ENCODE measurements at regions of chr7 and their contacts with region 1.

Region 1: GRCh38 chr7:81457852-81458522 is 311.9 kb downstream of the HGF start:
- DNase-seq: no peak
- H3K4me3 ChIP-seq: no peak overlapping the region
- H3K27ac ChIP-seq: no peak overlapping the region
- H3K4me1 ChIP-seq: peaks cover 0 to 17% of the 10 kb centered on the region in 2 experiments; a peak in 2 of 4 replicates
- H3K27me3 ChIP-seq: no peaks in the 10 kb centered on the region
- CTCF ChIP-seq: peak; percentile 74
- EP300 ChIP-seq: no peak
- RAD21 ChIP-seq: peak; percentile 81

Region 2: DNA sequence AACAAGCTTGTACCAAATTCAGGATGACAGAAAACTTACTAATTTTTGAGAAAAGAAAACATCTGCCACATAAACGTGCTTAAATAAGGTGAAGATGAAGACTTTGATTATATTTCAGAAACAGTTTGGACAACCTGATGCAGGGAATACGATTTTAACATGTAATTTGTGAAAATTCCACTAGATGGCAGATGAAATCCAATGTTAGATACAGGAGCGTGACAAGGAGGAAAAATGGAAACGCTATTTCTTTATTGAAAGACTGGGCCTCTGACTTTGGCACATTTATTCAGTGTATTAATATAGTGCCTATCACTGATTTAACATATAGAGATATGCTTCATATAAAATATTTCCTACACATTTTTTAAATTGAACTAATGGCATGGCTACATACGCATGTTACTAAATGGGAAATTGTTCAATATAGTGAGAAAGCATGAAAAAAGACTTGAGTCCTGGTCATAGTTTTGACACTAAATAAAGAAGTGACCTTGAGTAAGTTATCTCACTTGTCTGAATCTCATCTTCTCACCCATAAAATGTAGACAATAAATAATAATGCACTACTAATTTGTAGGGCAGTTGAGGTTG is 758.8 kb before region 1 on chr7:
- CTCF ChIA-PET with region 1: interaction called, 49 read pairs
- POLR2A ChIA-PET with region 1: no interaction called
- DNase-seq: peak; percentile 36
- H3K4me3 ChIP-seq: no peak overlapping the region
- H3K27ac ChIP-seq: no peak overlapping the region
- H3K4me1 ChIP-seq: peaks cover 8 to 16% of the 10 kb centered on the region in 2 experiments; a peak in 3 of 4 replicates
- H3K27me3 ChIP-seq: no peaks in the 10 kb centered on the region
- CTCF ChIP-seq: peak; percentile 91
- EP300 ChIP-seq: no peak
- RAD21 ChIP-seq: peak; percentile 99

Region 3: GRCh38 chr7:80907141-80907601 is 550.8 kb before region 1 on chr7:
- CTCF ChIA-PET with region 1: interaction called, 10 read pairs
- POLR2A ChIA-PET with region 1: no interaction called
- DNase-seq: peak; percentile 66
- H3K4me3 ChIP-seq: peak overlapping the region; percentile 2 to 31; a peak in 3 of 4 replicates
- H3K27ac ChIP-seq: peak overlapping the region; percentile 69 to 97
- H3K4me1 ChIP-seq: peaks cover 24 to 54% of the 10 kb centered on the region in 2 experiments
- H3K27me3 ChIP-seq: no peaks in the 10 kb centered on the region
- CTCF ChIP-seq: no peak
- EP300 ChIP-seq: peak; percentile 91 to 96
- RAD21 ChIP-seq: peak; percentile 22; the same call in 1 of the 2 replicates

Region 4: GRCh38 chr7:80941208-80941758 is 516.7 kb before region 1 on chr7:
- CTCF ChIA-PET with region 1: interaction called, 10 read pairs
- POLR2A ChIA-PET with region 1: no interaction called
- DNase-seq: no peak
- H3K4me3 ChIP-seq: no peak overlapping the region
- H3K27ac ChIP-seq: peak overlapping the region; percentile 79 to 87; a peak in 3 of 4 replicates
- H3K4me1 ChIP-seq: peaks cover 3 to 18% of the 10 kb centered on the region in 2 experiments; a peak in 3 of 4 replicates
- H3K27me3 ChIP-seq: no peaks in the 10 kb centered on the region
- CTCF ChIP-seq: no peak
- EP300 ChIP-seq: peak in 1 of 2 experiments; percentile 59; a peak in 2 of 4 replicates
- RAD21 ChIP-seq: no peak

Region 5: DNA sequence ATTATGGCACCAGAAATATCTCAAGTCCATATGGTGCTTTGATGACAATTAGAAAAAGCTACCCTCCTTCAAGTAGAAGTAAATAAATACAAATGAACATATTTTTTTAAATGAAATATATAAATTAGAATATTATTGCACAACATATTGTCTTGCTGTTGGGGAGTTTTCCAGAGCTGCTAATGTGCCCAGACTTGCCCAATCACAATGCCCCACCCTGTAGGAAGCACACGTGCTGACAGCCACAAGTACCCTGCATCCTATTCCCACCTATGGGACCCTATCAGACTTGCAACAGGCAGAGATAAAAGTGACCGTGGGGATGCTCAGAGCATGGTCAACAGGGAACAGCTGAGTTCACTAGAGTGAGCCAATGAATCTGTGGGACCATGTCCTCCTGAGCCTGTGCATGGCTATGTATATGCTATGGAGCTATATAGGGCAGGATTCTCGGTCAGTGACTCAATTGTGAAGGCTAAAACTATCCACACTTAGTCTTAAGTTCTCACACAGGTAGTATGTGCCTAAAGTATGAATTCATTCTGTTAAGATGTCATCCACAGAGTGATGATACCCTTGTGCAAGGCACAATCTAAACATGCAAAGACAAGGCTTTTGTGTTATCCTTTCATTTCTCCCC is 24.2 kb before region 1 on chr7:
- CTCF ChIA-PET with region 1: no interaction called
- POLR2A ChIA-PET with region 1: no interaction called
- DNase-seq: no peak
- H3K4me3 ChIP-seq: no peak overlapping the region
- H3K27ac ChIP-seq: no peak overlapping the region
- H3K4me1 ChIP-seq: no peaks in the 10 kb centered on the region
- H3K27me3 ChIP-seq: no peaks in the 10 kb centered on the region
- CTCF ChIP-seq: no peak
- EP300 ChIP-seq: no peak
- RAD21 ChIP-seq: no peak

Region 6: GRCh38 chr7:81447351-81447952 is 10.5 kb before region 1 on chr7:
- CTCF ChIA-PET with region 1: interaction called, 20 read pairs
- POLR2A ChIA-PET with region 1: no interaction called
- DNase-seq: peak; percentile 50
- H3K4me3 ChIP-seq: no peak overlapping the region
- H3K27ac ChIP-seq: no peak overlapping the region
- H3K4me1 ChIP-seq: no peaks in the 10 kb centered on the region; a peak in 1 of 4 replicates
- H3K27me3 ChIP-seq: no peaks in the 10 kb centered on the region
- CTCF ChIP-seq: peak; percentile 79
- EP300 ChIP-seq: no peak
- RAD21 ChIP-seq: peak; percentile 97

Measured in SK-N-SH (cell line).